K562 (cell line): ENCODE measurements at regions of chr12 and their contacts with region 1.

Region 1: DNA sequence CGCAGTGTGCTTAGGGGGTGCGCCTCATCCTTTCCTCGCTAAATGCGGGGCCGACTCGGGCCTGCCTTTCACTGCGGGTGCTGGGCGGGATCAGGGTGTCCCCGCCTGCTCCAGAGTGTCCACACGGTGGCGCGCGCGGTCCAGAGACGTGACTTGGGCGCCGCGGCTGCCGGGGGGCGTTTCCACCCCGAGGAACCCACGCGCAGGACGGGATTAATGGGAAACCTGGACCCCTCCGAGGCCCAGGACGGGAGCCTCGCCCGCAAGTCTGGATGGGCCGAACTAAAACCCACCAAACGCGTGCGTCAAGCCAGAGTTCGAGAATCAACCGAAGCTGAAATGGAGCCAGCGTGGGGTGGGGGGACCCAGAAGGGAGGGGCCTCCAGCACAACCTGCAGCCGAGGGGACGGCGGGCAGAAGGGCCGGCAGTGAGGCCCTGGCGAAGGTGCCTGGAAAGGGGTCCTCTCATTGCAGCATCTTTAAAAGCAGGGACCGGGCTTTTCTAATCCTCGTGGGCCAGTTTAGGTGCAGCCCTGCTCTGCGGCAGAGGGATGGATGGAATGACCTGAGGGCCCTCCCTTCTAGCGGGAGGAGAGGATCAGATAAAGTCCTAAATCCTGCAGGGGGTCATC is 93.3 kb downstream of the NINJ2 start:
- DNase-seq: peak; percentile 83 to 89 (median 88)
- ATAC-seq: peak; percentile 93
- H3K4me3 ChIP-seq: peak overlapping the region; percentile 56
- H3K27ac ChIP-seq: peak overlapping the region; percentile 34; the same call in 1 of the 3 replicates
- H3K4me1 ChIP-seq: peaks cover 15 to 39% of the 10 kb centered on the region in 2 experiments; a peak in 4 of 5 replicates
- H3K27me3 ChIP-seq: no peaks in the 10 kb centered on the region
- CTCF ChIP-seq: peak; percentile 77 to 89 (median 82)
- EP300 ChIP-seq: no peak
- POLR2A ChIP-seq: no peak
- RAD21 ChIP-seq: peak; percentile 87 to 88

Region 2: DNA sequence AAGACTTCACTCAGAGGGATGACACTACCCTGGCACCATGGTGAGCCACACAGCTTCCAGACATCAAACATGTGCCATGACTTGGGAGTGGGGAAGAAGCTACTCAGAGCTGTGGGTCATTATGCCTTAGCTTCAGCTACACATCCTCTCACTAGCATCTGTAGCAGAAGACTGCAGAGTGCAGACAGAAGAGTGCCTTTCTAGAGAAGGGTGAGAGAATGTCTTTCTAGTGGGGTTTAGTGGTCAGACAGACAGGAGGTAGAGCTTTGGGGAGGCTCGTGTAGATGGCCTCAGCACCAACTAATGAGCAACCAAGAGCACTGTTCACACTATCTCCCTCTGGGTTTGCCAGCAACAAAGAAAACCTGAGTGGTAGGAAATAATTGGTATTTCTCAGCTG is 115.1 kb before region 1 on chr12:
- CTCF ChIA-PET with region 1: no interaction called
- POLR2A ChIA-PET with region 1: no interaction called
- in situ Hi-C with region 1: no loop called
- intact Hi-C with region 1: no loop called
- DNase-seq: no peak
- ATAC-seq: no peak
- H3K4me3 ChIP-seq: no peak overlapping the region
- H3K27ac ChIP-seq: no peak overlapping the region
- H3K4me1 ChIP-seq: peaks cover 0 to 15% of the 10 kb centered on the region in 2 experiments; a peak in 2 of 5 replicates
- H3K27me3 ChIP-seq: peaks cover 0 to 8% of the 10 kb centered on the region in 2 experiments; a peak in 2 of 5 replicates
- CTCF ChIP-seq: no peak
- EP300 ChIP-seq: no peak
- POLR2A ChIP-seq: no peak
- RAD21 ChIP-seq: no peak

Region 3: DNA sequence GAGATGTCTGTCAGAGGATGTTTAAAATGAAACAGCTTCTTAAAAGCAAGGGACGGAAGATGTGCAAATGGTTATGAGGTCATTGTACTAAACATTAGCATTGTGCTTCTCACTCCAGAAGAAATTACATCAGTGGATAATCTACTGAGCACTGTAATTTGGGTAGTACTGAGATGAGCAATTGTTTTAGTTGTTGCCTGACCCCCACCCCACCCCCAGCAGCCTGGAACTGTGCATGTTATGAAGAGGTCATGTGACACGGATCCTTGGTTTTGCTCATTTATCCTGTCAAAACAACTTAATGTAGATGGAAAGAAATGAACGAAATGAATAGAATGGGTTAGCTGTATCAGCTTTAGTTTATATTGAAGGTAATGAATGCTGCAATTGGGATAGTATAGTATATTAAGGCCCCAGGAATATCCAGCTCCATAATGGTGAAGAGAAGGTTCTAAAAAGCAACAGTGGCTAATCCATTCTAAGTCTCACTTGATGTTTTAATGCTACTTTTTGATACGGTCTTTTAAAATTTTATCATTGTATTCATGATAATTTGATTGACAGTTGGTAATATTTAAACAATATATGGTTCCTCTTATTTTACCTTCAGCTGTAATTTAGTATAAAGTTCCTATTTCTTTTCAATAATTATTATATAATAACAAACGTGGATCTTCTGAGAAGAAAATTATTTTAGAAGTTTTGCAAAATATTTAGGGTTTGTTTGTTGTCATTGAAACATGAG is 240.9 kb after region 1 on chr12:
- CTCF ChIA-PET with region 1: interaction called, 17 read pairs
- POLR2A ChIA-PET with region 1: no interaction called
- in situ Hi-C with region 1: loop called (anchors 5 kb)
- intact Hi-C with region 1: loop called (anchors 5 kb)
- DNase-seq: peak in 1 of 4 experiments; percentile 7
- ATAC-seq: peak; percentile 70
- H3K4me3 ChIP-seq: no peak overlapping the region
- H3K27ac ChIP-seq: no peak overlapping the region
- H3K4me1 ChIP-seq: peaks cover 2 to 3% of the 10 kb centered on the region in 2 experiments; a peak in 3 of 5 replicates
- H3K27me3 ChIP-seq: no peaks in the 10 kb centered on the region
- CTCF ChIP-seq: no peak
- EP300 ChIP-seq: no peak
- POLR2A ChIP-seq: no peak
- RAD21 ChIP-seq: no peak

Region 4: GRCh38 chr12:949453-950191 is 379.7 kb after region 1 on chr12 and contains the start of gene RAD52:
- CTCF ChIA-PET with region 1: interaction called, 10 read pairs
- POLR2A ChIA-PET with region 1: interaction called, 3 read pairs
- in situ Hi-C with region 1: loop called (anchors 5 kb)
- intact Hi-C with region 1: loop called (anchors 5 kb)
- DNase-seq: peak; percentile 82 to 95 (median 85)
- ATAC-seq: peak; percentile 98
- H3K4me3 ChIP-seq: peak within 1 kb of the TSS; percentile 86
- H3K27ac ChIP-seq: peak within 1 kb of the TSS; percentile 88
- H3K4me1 ChIP-seq: peaks cover 2 to 8% of the 10 kb centered on the region in 2 experiments; a peak in 4 of 5 replicates
- H3K27me3 ChIP-seq: no peaks in the 10 kb centered on the region
- CTCF ChIP-seq: peak; percentile 79 to 95 (median 83)
- EP300 ChIP-seq: peak; percentile 20
- POLR2A ChIP-seq: peak; percentile 88
- RAD21 ChIP-seq: peak; percentile 69 to 78
- polyA plus RNA-seq, gene RAD52: 1.3 to 1.6 TPM

Region 5: GRCh38 chr12:1093166-1093751 is 523.3 kb after region 1 on chr12:
- CTCF ChIA-PET with region 1: no interaction called
- POLR2A ChIA-PET with region 1: interaction called, 3 read pairs
- in situ Hi-C with region 1: no loop called
- intact Hi-C with region 1: loop called (anchors 5 kb)
- DNase-seq: peak in 3 of 4 experiments; percentile 12 to 57 (median 16)
- ATAC-seq: peak; percentile 75
- H3K4me3 ChIP-seq: no peak overlapping the region
- H3K27ac ChIP-seq: no peak overlapping the region
- H3K4me1 ChIP-seq: no peaks in the 10 kb centered on the region
- H3K27me3 ChIP-seq: no peaks in the 10 kb centered on the region
- CTCF ChIP-seq: peak; percentile 46 to 66 (median 56); a peak in 5 of 6 replicates
- EP300 ChIP-seq: no peak
- POLR2A ChIP-seq: no peak
- RAD21 ChIP-seq: peak; percentile 59 to 62